ENCODE measurements at regions of chr7 and their contacts with region 1.

Region 1: GRCh38 chr7:103296901-103297836 is at the start of gene PMPCB:
- DNase-seq: peak; percentile 99
- total RNA-seq, gene PMPCB: 38.7 to 43.5 TPM

Region 2: GRCh38 chr7:102916426-102916825 is 380.7 kb before region 1 on chr7:
- intact Hi-C with region 1: loop called in 1 of 2 experiments (anchors 5 kb)
- DNase-seq: no peak

Region 3: GRCh38 chr7:103240806-103241205 is 56.4 kb before region 1 on chr7:
- intact Hi-C with region 1: no loop called
- DNase-seq: no peak

Region 4: DNA sequence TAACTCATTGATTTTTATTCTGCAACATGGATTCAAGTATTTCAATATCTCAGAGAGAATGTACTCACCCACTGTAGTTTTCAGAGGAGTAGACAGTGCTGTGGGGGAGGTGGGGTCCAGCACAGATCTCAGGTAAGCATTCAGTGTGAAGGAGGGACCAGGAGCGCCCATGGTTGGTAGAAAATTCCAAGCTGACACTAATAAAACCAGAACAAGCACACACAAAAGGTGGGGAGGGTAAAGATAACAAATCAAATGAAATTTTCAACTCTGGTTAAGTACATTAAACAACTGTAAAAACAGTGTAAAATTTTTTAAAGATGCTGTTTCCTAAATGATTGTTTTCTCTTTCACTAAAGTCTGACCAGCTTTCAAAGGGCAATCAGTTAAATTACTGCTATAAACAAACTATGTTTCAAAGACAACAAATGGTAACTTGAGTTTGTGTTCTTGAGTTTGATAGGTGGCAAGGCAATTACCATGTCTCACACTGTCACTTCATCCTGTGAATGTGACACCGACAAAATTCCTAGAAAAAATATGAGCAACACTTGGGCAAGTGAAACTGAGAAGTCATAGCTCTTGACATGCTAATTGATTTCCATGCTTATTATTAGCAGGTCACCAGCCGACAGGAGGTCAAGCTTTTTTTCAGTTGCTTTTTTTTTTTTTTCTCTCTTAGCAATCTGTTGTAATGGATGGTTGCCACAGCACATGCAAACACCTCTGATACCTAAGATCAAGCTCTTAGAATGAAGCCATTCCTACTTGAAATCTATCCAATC is 354.6 kb after region 1 on chr7:
- intact Hi-C with region 1: no loop called
- DNase-seq: no peak